Body of pancreas (tissue), 4 donors: ENCODE measurements at regions of chr10 and their contacts with region 1.

Region 1: DNA sequence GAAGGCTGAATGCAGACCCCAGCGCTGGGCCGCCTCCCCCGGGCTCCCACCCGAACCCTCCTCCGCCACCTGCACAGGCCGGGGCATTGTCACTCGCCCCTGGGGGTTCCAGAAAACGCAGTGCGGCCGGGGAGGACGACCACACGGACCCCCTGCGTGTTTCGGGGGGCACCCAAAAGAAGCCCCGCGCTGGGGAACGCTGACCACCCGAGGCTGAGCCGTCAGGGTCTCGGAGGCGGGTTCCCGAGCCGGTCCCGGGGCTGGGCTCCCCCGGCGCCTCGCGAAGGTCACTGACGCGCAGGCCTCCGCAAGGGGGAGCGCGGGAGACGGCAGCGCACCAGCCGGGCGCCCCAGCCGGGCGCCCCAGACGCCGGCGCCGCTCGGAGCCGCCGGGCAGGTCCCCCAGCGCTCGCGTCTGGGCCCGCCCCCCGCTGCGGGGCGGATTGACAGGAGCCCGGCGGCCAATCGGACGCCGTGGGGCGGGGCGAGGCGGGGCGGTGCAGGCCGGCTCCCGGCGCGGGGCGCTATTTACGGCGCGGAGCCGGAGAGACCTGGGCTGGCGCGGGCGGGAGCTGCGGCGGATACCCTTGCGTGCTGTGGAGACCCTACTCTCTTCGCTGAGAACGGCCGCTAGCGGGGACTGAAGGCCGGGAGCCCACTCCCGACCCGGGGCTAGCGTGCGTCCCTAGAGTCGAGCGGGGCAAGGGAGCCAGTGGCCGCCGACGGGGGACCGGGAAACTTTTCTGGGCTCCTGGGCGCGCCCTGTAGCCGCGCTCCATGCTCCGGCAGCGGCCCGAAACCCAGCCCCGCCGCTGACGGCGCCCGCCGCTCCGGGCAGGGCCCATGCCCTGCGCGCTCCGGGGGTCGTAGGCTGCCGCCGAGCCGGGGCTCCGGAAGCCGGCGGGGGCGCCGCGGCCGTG is at the start of gene BAMBI:
- DNase-seq: peak; percentile 89 to 96 (median 92)
- ATAC-seq: peak; percentile 95
- H3K4me3 ChIP-seq: peak within 1 kb of the TSS; percentile 37 to 49
- H3K27ac ChIP-seq: peak within 1 kb of the TSS in 3 of 4 donors; percentile 63 to 68 (median 64)
- H3K4me1 ChIP-seq: peaks cover 17% of the 10 kb centered on the region
- H3K27me3 ChIP-seq: peaks cover 0 to 4% of the 10 kb centered on the region in 2 donors
- CTCF ChIP-seq: peak; percentile 41 to 93 (median 72)
- POLR2A ChIP-seq: peak; percentile 88 to 92 (median 91)
- total RNA-seq, gene BAMBI: 9.1 to 26.0 TPM

Region 2: GRCh38 chr10:28520346-28520745 is 156.9 kb before region 1 on chr10:
- intact Hi-C with region 1: no loop called
- DNase-seq: no peak
- ATAC-seq: no peak
- H3K4me3 ChIP-seq: no peak overlapping the region
- H3K27ac ChIP-seq: no peak overlapping the region
- H3K4me1 ChIP-seq: no peaks in the 10 kb centered on the region
- H3K27me3 ChIP-seq: no peaks in the 10 kb centered on the region
- CTCF ChIP-seq: no peak
- POLR2A ChIP-seq: no peak

Region 3: GRCh38 chr10:28991326-28992270 is 314.4 kb after region 1 on chr10:
- intact Hi-C with region 1: loop called (anchors 10 kb)
- DNase-seq: peak; percentile 30 to 60 (median 42)
- ATAC-seq: peak; percentile 35
- H3K4me3 ChIP-seq: no peak overlapping the region
- H3K27ac ChIP-seq: no peak overlapping the region
- H3K4me1 ChIP-seq: no peaks in the 10 kb centered on the region
- H3K27me3 ChIP-seq: no peaks in the 10 kb centered on the region
- CTCF ChIP-seq: peak; percentile 53 to 80 (median 72)
- POLR2A ChIP-seq: no peak